Heart left ventricle (tissue), 16 donors: ENCODE measurements at regions of chr5 and their contacts with region 1.

Region 1: GRCh38 chr5:59598547-59598874 is 295.0 kb downstream of the PDE4D start:
- DNase-seq: no peak
- ATAC-seq: peak in 1 of 4 donors; percentile 32
- H3K4me3 ChIP-seq: peak overlapping the region in 8 of 12 donors; percentile 21 to 46 (median 42)
- H3K27ac ChIP-seq: peak overlapping the region in 1 of 12 donors; percentile 59
- H3K4me1 ChIP-seq: peaks cover 0 to 18% (median 0%) of the 10 kb centered on the region in 12 donors
- H3K27me3 ChIP-seq: no peaks in the 10 kb centered on the region
- CTCF ChIP-seq: no peak
- POLR2A ChIP-seq: no peak

Region 2: DNA sequence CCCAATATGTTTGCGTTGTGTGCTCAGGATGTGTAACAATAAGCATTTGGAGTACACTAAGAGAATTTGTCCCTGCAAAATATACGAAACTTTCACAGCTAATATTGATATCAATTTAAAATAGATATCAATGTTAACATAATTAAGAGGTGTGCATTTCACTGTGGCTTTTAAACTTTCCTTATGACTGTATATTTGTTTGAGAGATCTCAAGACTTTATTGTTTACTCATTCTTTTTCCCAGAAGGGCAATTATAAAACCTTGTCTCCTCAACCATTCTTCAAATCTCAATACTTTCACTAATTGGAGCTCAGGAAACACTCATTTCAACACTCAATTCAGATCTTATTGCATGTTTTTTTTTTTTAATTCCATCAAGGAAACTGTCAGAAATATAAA is 53.9 kb after region 1 on chr5:
- intact Hi-C with region 1: loop called in 1 of 10 experiments (anchors 5 kb)
- DNase-seq: no peak
- ATAC-seq: no peak
- H3K4me3 ChIP-seq: no peak overlapping the region
- H3K27ac ChIP-seq: no peak overlapping the region
- H3K4me1 ChIP-seq: peaks cover 0 to 14% (median 7%) of the 10 kb centered on the region in 12 donors
- H3K27me3 ChIP-seq: no peaks in the 10 kb centered on the region
- CTCF ChIP-seq: no peak
- POLR2A ChIP-seq: no peak